ENCODE measurements at regions of chr6 and their contacts with region 1.

Region 1: DNA sequence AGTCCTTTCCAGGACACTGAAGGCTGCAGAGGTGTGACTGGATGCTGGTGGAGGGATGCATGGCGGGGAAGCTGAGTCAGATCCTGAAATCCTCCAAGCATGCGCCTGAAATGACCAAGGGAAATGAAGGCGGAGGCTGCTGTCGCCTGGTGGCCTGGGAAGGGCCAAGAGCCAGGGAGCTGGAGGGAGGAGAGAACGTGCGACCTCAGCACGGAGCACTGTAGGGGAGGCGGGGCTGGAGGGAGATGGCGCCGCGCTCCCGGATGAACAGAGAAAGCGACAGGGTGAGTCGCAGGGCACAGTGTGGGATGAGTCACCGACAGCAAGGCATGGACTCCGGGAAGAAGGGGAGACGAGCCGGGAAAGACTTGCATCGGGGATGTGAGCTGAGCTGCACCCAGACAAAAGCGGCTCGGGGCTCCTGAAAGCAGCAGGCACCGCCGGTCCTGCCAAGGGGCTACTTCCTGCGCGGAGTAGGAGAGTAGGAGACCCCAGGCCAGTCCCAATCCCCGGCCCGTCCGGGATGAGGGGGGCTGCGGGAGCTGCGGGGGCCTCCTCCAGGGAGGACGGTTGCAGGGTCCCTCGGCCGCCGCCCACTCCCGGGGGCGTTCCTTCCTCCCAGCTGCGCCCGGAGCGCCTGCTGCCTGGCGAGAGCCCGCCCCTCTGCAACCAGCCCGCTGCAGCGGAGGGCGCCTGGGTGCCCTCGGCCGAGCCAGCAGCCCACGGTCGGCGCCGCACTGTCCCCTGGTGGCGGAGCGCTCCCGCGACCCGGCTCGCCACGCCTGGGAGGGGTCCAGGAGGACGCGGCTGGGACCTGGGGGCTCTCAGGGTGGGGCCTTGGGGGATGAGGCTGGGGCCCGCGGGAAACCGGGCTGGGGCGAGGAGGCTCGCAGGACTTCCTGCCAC is 11.0 kb upstream of the NQO2 start:
- DNase-seq: peak; percentile 65 to 91 (median 75)
- ATAC-seq: peak; percentile 64
- H3K4me3 ChIP-seq: peak overlapping the region; percentile 65 to 94
- H3K4me3 Mint-ChIP-seq: peak overlapping the region; percentile 96
- H3K27ac ChIP-seq: peak overlapping the region; percentile 97 to 98
- H3K27ac Mint-ChIP-seq: peak overlapping the region; percentile 99
- H3K4me1 ChIP-seq: peaks cover 8% of the 10 kb centered on the region
- H3K4me1 Mint-ChIP-seq: peaks cover 27% of the 10 kb centered on the region
- H3K27me3 ChIP-seq: no peaks in the 10 kb centered on the region
- H3K27me3 Mint-ChIP-seq: no peaks in the 10 kb centered on the region
- CTCF ChIP-seq: peak; percentile 68

Region 2: DNA sequence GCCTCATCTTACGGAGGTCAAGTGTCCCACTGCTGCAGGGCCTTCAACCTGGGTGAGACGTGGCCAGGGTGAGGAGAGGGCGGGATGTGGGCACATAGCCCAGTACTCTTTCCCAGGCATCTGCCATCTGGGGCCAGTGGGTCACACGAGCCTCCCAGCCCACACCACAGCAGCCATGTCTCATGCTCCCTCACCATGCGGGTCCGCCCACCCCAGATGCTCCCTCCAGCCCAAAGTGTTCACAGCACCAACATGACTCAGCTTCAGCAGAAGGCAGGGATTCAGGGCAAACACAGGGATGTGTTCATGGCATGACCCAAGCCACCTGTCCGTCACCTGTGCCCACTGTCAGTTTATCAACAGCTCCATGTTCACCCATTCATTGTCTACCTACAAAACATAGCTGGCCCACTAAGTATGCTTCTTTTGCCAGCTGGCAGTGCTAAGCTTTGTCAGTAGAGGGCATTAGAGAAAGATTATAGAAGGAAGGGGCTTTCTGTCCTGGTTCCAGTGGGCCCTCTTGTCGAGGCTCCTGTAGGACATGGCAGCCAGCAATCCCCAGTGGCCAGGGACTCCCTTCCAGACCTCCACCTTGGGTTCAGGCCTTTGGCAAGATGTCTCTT is 1490.1 kb before region 1 on chr6:
- CTCF ChIA-PET with region 1: no interaction called
- POLR2A ChIA-PET with region 1: no interaction called
- intact Hi-C with region 1: no loop called
- DNase-seq: no peak
- ATAC-seq: no peak
- H3K4me3 ChIP-seq: no peak overlapping the region
- H3K4me3 Mint-ChIP-seq: no peak overlapping the region
- H3K27ac ChIP-seq: no peak overlapping the region
- H3K27ac Mint-ChIP-seq: no peak overlapping the region
- H3K4me1 ChIP-seq: no peaks in the 10 kb centered on the region
- H3K4me1 Mint-ChIP-seq: no peaks in the 10 kb centered on the region
- H3K27me3 ChIP-seq: no peaks in the 10 kb centered on the region
- H3K27me3 Mint-ChIP-seq: peaks cover 5% of the 10 kb centered on the region
- CTCF ChIP-seq: no peak

Region 3: GRCh38 chr6:2353412-2354137 is 635.1 kb before region 1 on chr6:
- CTCF ChIA-PET with region 1: no interaction called
- POLR2A ChIA-PET with region 1: no interaction called
- intact Hi-C with region 1: no loop called
- DNase-seq: peak; percentile 10 to 62 (median 48)
- ATAC-seq: no peak
- H3K4me3 ChIP-seq: no peak overlapping the region
- H3K4me3 Mint-ChIP-seq: no peak overlapping the region
- H3K27ac ChIP-seq: no peak overlapping the region
- H3K27ac Mint-ChIP-seq: no peak overlapping the region
- H3K4me1 ChIP-seq: no peaks in the 10 kb centered on the region
- H3K4me1 Mint-ChIP-seq: no peaks in the 10 kb centered on the region
- H3K27me3 ChIP-seq: no peaks in the 10 kb centered on the region
- H3K27me3 Mint-ChIP-seq: no peaks in the 10 kb centered on the region
- CTCF ChIP-seq: peak; percentile 75

Region 4: DNA sequence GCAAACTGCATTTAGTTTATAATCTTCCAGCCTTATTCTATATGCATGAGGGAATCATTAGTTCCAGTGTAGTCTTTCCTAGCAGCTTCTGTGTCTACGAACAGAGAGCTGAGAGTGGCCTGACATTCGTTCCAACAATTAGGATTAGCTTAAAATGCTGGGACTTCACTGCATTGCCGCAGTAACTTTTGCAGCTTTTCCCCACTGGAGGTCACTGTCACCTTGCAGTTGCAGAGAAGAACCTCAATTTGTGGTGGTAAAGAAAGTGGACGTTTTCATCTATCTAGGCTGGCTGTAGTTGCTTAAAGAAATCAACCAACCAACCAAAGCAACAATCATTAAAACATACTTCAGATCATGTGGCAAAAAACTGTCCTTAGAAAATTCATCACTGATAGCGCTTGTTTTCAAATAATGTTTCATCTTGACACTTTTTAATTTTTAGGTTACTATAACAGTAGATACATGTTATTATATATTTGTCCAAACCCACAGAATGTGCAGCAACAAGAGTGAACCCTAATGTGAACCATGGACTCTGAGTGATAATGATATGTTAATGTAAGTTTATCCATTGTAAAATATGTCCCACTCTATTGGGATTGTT is 250.2 kb before region 1 on chr6:
- CTCF ChIA-PET with region 1: no interaction called
- POLR2A ChIA-PET with region 1: no interaction called
- intact Hi-C with region 1: loop called in 1 of 2 experiments (anchors 1 kb)
- DNase-seq: peak in 8 of 9 experiments; percentile 26 to 71 (median 60)
- ATAC-seq: peak; percentile 77
- H3K4me3 ChIP-seq: no peak overlapping the region
- H3K4me3 Mint-ChIP-seq: no peak overlapping the region
- H3K27ac ChIP-seq: no peak overlapping the region
- H3K27ac Mint-ChIP-seq: no peak overlapping the region
- H3K4me1 ChIP-seq: no peaks in the 10 kb centered on the region
- H3K4me1 Mint-ChIP-seq: no peaks in the 10 kb centered on the region
- H3K27me3 ChIP-seq: no peaks in the 10 kb centered on the region
- H3K27me3 Mint-ChIP-seq: peaks cover 4% of the 10 kb centered on the region
- CTCF ChIP-seq: peak; percentile 70

Region 5: GRCh38 chr6:2841264-2842138 is 147.2 kb before region 1 on chr6 and contains the start of gene SERPINB1:
- CTCF ChIA-PET with region 1: interaction called, 61 read pairs
- POLR2A ChIA-PET with region 1: interaction called, 31 read pairs
- intact Hi-C with region 1: loop called (anchors 1 kb)
- DNase-seq: peak; percentile 47 to 88 (median 71)
- ATAC-seq: peak; percentile 77
- H3K4me3 ChIP-seq: peak within 1 kb of the TSS; percentile 56 to 76
- H3K4me3 Mint-ChIP-seq: peak within 1 kb of the TSS; percentile 88
- H3K27ac ChIP-seq: peak within 1 kb of the TSS; percentile 58 to 68
- H3K27ac Mint-ChIP-seq: peak within 1 kb of the TSS; percentile 92
- H3K4me1 ChIP-seq: peaks cover 30% of the 10 kb centered on the region
- H3K4me1 Mint-ChIP-seq: peaks cover 56% of the 10 kb centered on the region
- H3K27me3 ChIP-seq: no peaks in the 10 kb centered on the region
- H3K27me3 Mint-ChIP-seq: no peaks in the 10 kb centered on the region
- CTCF ChIP-seq: no peak
- total RNA-seq, gene SERPINB1: 48.8 to 50.7 TPM

Region 6: DNA sequence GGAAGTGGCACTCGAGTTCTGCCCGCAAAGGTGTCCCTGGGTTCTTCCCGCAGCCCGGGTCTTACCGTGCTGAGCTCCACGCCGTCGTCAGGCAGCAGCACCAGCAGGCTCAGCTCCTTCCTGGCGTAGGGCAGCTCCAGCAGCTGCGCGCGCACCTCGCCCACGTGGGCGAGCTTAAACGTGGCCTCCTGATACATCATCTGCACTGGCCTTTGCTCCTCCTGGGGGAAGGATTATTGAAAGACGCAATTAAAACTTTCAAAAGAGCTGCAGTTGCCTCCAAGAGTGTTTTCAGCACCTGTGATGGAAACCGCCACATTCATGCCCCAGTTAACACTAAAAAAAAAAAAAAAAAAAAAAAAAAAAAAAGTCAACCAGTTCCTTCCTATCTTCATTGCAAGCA is 96.9 kb before region 1 on chr6:
- CTCF ChIA-PET with region 1: interaction called, 3 read pairs
- POLR2A ChIA-PET with region 1: interaction called, 13 read pairs
- intact Hi-C with region 1: no loop called
- DNase-seq: peak; percentile 35 to 89 (median 68)
- ATAC-seq: peak; percentile 94
- H3K4me3 ChIP-seq: peak overlapping the region in 1 of 2 experiments; percentile 9
- H3K4me3 Mint-ChIP-seq: peak overlapping the region; percentile 69
- H3K27ac ChIP-seq: peak overlapping the region; percentile 17 to 51
- H3K27ac Mint-ChIP-seq: peak overlapping the region; percentile 94
- H3K4me1 ChIP-seq: peaks cover 29% of the 10 kb centered on the region
- H3K4me1 Mint-ChIP-seq: peaks cover 67% of the 10 kb centered on the region
- H3K27me3 ChIP-seq: no peaks in the 10 kb centered on the region
- H3K27me3 Mint-ChIP-seq: no peaks in the 10 kb centered on the region
- CTCF ChIP-seq: no peak

Region 7: GRCh38 chr6:2931970-2932748 is 56.5 kb before region 1 on chr6:
- CTCF ChIA-PET with region 1: interaction called, 81 read pairs
- POLR2A ChIA-PET with region 1: interaction called, 59 read pairs
- intact Hi-C with region 1: loop called in 1 of 2 experiments (anchors 1 kb)
- DNase-seq: peak; percentile 74 to 90 (median 86)
- ATAC-seq: peak; percentile 86
- H3K4me3 ChIP-seq: no peak overlapping the region
- H3K4me3 Mint-ChIP-seq: peak overlapping the region; percentile 45
- H3K27ac ChIP-seq: no peak overlapping the region
- H3K27ac Mint-ChIP-seq: peak overlapping the region; percentile 38
- H3K4me1 ChIP-seq: peaks cover 27% of the 10 kb centered on the region
- H3K4me1 Mint-ChIP-seq: peaks cover 27% of the 10 kb centered on the region
- H3K27me3 ChIP-seq: no peaks in the 10 kb centered on the region
- H3K27me3 Mint-ChIP-seq: no peaks in the 10 kb centered on the region
- CTCF ChIP-seq: peak; percentile 92

Region 8: GRCh38 chr6:2971420-2972218 is 17.1 kb before region 1 on chr6 and contains the start of gene SERPINB6:
- CTCF ChIA-PET with region 1: interaction called, 13 read pairs
- POLR2A ChIA-PET with region 1: interaction called, 12 read pairs
- intact Hi-C with region 1: loop called (anchors 1 to 2 kb)
- DNase-seq: peak in 8 of 9 experiments; percentile 24 to 69 (median 42)
- ATAC-seq: peak; percentile 54
- H3K4me3 ChIP-seq: peak within 1 kb of the TSS; percentile 61 to 77
- H3K4me3 Mint-ChIP-seq: peak within 1 kb of the TSS; percentile 90
- H3K27ac ChIP-seq: peak within 1 kb of the TSS; percentile 64
- H3K27ac Mint-ChIP-seq: peak within 1 kb of the TSS; percentile 92
- H3K4me1 ChIP-seq: peaks cover 21% of the 10 kb centered on the region
- H3K4me1 Mint-ChIP-seq: peaks cover 53% of the 10 kb centered on the region
- H3K27me3 ChIP-seq: no peaks in the 10 kb centered on the region
- H3K27me3 Mint-ChIP-seq: no peaks in the 10 kb centered on the region
- CTCF ChIP-seq: no peak
- total RNA-seq, gene SERPINB6: 41.7 to 45.6 TPM

Region 9: DNA sequence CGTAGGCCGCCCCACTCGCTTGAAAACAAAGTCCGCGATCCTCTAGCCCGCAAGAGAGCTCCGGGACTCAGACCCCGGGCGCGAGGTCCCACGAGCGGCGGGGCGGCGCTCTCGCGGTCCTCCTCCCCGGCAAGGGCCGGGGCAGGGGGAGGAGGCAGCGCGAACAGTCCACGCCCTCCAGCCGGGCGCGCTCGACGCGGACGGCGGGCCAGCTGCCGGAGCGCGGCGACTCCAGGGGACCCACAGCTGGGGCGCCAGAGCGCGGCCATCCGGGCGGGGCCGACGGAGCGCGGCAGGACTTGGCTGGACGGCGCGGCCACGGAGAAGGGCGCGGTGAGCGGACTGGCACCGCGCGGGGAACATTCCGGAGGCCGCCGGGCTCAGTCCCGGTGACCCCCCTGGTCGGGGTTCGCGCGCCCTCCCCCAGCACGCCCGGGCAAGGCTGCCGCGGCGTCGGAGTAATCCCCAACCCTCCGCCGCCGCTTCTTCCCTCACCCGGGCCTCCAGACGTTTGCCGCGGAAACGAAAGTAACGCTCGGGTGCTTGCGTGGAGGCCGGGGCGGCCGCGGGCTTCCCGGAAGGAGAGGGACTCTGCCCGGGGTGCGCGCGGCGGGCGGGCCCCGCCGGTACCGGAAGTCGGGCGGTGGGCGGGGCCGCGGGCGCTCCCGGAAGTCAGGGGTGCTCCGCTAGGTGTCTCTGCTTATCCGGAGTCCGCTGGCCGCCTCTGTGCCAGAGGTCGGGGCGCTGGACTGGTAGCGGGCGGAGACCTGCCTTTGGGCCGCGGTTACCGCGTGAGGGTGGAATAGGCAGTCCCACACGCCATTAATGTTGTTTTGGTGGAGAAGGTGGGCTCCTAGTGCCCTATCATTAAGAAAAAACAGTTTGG is 79.9 kb after region 1 on chr6 and contains the start of gene RIPK1:
- CTCF ChIA-PET with region 1: interaction called, 8 read pairs
- POLR2A ChIA-PET with region 1: interaction called, 20 read pairs
- intact Hi-C with region 1: no loop called
- DNase-seq: peak; percentile 85 to 98 (median 93)
- ATAC-seq: peak; percentile 74
- H3K4me3 ChIP-seq: peak within 1 kb of the TSS; percentile 67 to 95
- H3K4me3 Mint-ChIP-seq: peak within 1 kb of the TSS; percentile 98
- H3K27ac ChIP-seq: peak within 1 kb of the TSS; percentile 93 to 96
- H3K27ac Mint-ChIP-seq: peak within 1 kb of the TSS; percentile 99
- H3K4me1 ChIP-seq: peaks cover 39% of the 10 kb centered on the region
- H3K4me1 Mint-ChIP-seq: peaks cover 62% of the 10 kb centered on the region
- H3K27me3 ChIP-seq: no peaks in the 10 kb centered on the region
- H3K27me3 Mint-ChIP-seq: no peaks in the 10 kb centered on the region
- CTCF ChIP-seq: peak; percentile 33
- total RNA-seq, gene RIPK1: 18.6 to 19.7 TPM